Endothelial cell of umbilical vein (primary cell): ENCODE measurements at regions of chr11 and their contacts with region 1.

Region 1: GRCh38 chr11:125404776-125405435 is 91.2 kb downstream of the FEZ1 start:
- DNase-seq: peak; percentile 47
- H3K4me3 ChIP-seq: no peak overlapping the region
- H3K27ac ChIP-seq: no peak overlapping the region
- H3K4me1 ChIP-seq: peaks cover 4% of the 10 kb centered on the region
- H3K27me3 ChIP-seq: peaks cover 9 to 12% of the 10 kb centered on the region in 2 experiments
- CTCF ChIP-seq: peak; percentile 79 to 99
- POLR2A ChIP-seq: no peak

Region 2: GRCh38 chr11:125364121-125364826 is 40.6 kb before region 1 on chr11:
- CTCF ChIA-PET with region 1: interaction called, 12 read pairs
- POLR2A ChIA-PET with region 1: no interaction called
- dilution Hi-C with region 1: no loop called
- intact Hi-C with region 1: no loop called
- DNase-seq: no peak
- H3K4me3 ChIP-seq: no peak overlapping the region
- H3K27ac ChIP-seq: no peak overlapping the region
- H3K4me1 ChIP-seq: peaks cover 4% of the 10 kb centered on the region
- H3K27me3 ChIP-seq: no peaks in the 10 kb centered on the region
- CTCF ChIP-seq: no peak
- POLR2A ChIP-seq: no peak

Region 3: GRCh38 chr11:125390946-125391345 is 14.0 kb before region 1 on chr11:
- CTCF ChIA-PET with region 1: interaction called, 12 read pairs
- POLR2A ChIA-PET with region 1: no interaction called
- dilution Hi-C with region 1: no loop called
- intact Hi-C with region 1: no loop called
- DNase-seq: peak; percentile 79
- H3K4me3 ChIP-seq: peak overlapping the region in 1 of 3 experiments; percentile 23
- H3K27ac ChIP-seq: peak overlapping the region; percentile 73
- H3K4me1 ChIP-seq: peaks cover 18% of the 10 kb centered on the region
- H3K27me3 ChIP-seq: peaks cover 0 to 2% of the 10 kb centered on the region in 2 experiments
- CTCF ChIP-seq: no peak
- POLR2A ChIP-seq: no peak

Region 4: DNA sequence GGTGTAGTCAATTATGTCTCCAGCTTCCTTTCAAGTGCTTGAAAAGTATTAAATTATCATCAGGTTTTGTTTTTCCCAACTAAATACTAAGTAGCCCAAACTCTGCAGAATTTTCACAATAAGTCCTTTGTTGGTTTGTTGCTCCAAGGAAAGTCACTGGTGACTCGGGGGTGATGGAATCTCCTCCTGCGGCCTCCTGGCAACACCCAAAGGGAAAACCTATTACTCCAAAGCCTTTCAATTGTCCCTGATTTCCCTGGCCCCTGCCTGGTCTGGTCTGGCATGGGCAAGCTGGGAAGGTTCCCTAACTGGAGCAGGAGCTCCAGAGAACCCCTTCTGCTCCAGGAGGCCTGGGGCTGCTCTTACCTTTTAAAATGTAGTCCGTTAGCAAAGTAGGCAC is 43.2 kb after region 1 on chr11:
- CTCF ChIA-PET with region 1: no interaction called
- POLR2A ChIA-PET with region 1: no interaction called
- dilution Hi-C with region 1: no loop called
- intact Hi-C with region 1: no loop called
- DNase-seq: no peak
- H3K4me3 ChIP-seq: no peak overlapping the region
- H3K27ac ChIP-seq: no peak overlapping the region
- H3K4me1 ChIP-seq: peaks cover 7% of the 10 kb centered on the region
- H3K27me3 ChIP-seq: no peaks in the 10 kb centered on the region
- CTCF ChIP-seq: no peak
- POLR2A ChIP-seq: no peak